GM10248 (cell line): ENCODE measurements at regions of chr6 and their contacts with region 1.

Region 1: DNA sequence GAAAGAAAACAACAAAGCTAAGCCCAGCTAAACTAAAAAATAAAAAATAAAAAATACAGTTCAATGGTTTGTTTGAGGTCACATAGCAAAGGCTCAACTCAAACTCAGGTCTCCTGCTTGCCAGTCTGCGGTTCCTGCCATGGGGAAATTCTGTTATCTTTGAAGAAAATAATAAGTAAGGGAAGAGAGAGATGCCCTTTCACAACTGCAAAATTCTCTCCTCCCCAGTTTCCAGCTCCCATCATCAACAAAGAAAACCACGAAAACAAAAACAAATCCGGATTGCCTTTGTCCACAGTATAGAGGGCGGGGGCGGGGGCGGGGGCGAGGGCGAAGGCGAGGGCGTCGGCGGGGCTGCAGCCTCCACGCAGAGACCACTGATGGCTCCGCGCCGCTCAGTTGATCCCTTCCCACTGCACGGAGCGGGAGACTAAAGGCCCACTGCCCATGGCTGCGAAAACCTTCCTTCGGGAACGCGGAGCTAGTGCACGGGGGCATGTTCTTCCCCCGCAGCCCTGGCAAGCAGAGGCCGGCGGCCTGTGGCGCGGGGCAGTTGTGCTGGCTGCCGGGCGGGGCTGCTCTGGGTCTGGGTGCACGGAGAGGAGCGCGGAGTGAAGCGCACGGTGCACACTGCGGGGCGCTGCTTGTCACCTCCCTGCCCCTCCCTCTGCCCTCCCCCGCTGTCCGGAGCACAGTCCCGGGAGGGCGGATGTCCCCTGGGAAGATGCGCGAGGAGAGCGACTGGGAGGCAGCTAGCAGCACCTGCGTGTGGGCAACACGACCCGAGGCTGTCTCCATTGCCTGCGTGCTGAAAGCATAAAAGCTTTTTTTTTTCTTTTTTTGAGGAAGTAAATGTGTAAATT is 54.1 kb upstream of the TPD52L1 start:
- DNase-seq: peak; percentile 19
- CTCF ChIP-seq: no peak

Region 2: GRCh38 chr6:124995131-124995530 is 104.3 kb before region 1 on chr6:
- CTCF ChIA-PET with region 1: no interaction called
- POLR2A ChIA-PET with region 1: no interaction called
- DNase-seq: no peak
- CTCF ChIP-seq: no peak

Region 3: DNA sequence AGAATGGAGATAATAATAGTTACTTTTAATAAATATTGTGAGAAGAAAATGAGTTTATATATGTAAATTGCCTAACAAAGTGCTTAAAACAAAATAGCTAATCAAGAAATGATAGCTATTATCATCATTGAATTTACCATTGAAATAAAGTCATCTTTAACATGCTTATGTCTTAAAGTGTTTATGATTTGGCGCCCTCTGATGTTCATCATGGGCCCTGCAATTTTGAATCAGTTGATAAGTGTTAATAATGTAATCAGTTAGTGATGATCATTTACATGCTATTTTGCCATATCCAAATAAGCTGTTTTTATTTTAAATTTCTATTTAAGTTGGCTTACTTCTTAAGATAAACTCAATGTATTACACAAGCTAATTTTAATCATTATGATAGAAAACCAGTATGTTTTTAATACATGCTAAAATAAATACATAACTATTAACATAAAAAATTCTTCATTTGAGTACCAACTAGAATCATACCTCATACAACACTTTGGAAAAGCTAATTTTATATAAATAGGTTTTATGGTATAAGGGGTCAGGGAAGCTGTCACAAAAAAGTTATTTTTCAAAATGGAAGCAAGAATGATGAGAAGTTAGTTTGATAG is 14.9 kb after region 1 on chr6:
- CTCF ChIA-PET with region 1: interaction called, 19 read pairs
- POLR2A ChIA-PET with region 1: no interaction called
- DNase-seq: peak; percentile 29
- CTCF ChIP-seq: peak; percentile 62

Region 4: DNA sequence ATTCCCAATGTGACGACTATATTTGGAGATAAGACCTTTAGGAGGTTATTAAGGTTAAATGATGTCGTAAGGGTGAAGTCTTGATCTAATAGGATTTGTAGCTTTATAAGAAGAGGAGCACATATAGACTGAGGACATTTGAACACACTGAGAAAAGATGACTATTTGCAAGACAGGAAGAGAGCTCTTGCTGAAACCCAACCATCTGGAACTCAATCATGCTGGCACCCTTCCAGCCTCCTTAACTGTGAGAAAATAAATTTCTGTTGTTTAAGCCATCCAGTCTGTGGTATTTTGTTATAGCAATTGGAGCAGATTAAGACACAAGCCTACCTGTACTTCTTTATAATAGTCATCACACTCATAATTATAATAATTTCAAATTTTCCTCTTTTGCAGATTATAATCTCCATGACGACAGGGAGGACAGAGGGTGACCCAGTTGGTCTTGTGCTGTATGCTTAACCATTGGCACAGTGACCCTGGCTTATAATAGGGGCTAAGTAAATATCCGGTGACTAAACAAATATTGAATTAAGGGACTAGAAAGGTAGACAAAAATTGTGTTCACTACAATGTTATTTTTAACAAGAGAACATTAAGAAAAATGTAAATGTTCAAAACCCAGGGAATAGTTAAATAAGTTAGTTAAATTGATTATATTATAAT is 408.7 kb after region 1 on chr6:
- CTCF ChIA-PET with region 1: no interaction called
- POLR2A ChIA-PET with region 1: no interaction called
- DNase-seq: no peak
- CTCF ChIP-seq: no peak